ENCODE measurements at regions of chr10 and their contacts with region 1.

Region 1: GRCh38 chr10:121709675-121710073 is 111.4 kb upstream of the FGFR2 start:
- DNase-seq: no peak
- H3K4me3 ChIP-seq: no peak overlapping the region
- H3K27ac ChIP-seq: no peak overlapping the region
- H3K27me3 ChIP-seq: peaks cover 2% of the 10 kb centered on the region
- CTCF ChIP-seq: no peak

Region 2: DNA sequence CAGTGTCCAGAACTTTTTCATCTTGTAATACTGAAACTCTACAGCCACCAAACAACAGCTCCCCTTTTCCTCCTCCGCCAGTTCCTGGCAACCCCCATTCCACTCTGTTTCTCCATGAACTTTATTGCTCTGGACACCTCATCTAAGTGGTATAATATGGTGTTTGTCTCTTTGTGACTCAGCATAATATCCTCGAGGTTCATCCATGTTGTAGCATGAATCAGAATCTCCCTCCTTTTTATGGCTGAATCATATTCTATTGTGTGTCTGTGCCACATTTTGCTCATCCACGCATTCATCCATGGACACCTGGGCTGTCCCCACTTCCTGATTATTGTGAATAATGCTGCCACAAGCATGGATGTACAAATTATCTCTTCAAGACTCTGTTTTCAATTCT is 13.0 kb after region 1 on chr10:
- CTCF ChIA-PET with region 1: interaction called, 10 read pairs
- POLR2A ChIA-PET with region 1: no interaction called
- DNase-seq: no peak
- H3K4me3 ChIP-seq: no peak overlapping the region
- H3K27ac ChIP-seq: no peak overlapping the region
- H3K27me3 ChIP-seq: no peaks in the 10 kb centered on the region
- CTCF ChIP-seq: no peak